ENCODE measurements at regions of chr21 and their contacts with region 1.

Region 1: GRCh38 chr21:38355992-38356797 is 99.4 kb downstream of the KCNJ15 start:
- H3K4me3 ChIP-seq: no peak overlapping the region
- H3K27ac ChIP-seq: no peak overlapping the region
- H3K4me1 ChIP-seq: peaks cover 12% of the 10 kb centered on the region
- CTCF ChIP-seq: peak; percentile 96

Region 2: DNA sequence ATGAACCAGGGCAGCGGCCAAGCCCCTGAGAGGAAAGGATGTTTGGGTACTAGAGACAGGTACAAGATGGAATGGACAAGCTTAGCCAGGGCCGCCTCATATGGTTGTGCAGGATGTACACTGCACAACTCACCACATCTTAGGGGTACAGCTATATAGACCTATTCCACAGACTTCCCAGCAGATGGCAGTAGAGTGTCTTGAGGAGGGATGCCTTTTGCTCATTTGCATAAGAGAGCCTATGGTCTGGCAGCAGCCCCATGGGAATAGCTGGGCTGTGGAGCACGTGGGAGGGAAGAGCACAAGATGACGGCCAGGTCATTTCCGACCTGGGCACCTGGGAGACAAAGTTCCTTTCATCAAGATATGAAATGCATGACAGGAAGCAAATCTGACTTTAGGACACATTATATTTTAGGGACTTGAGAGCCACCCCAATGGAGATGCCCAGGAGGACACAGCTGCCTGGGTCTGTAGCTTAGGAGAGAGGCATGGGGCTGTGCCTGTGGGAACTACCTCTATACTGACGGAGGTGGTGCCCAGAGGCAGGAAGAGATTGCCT is 655.5 kb before region 1 on chr21:
- CTCF ChIA-PET with region 1: interaction called, 17 read pairs
- POLR2A ChIA-PET with region 1: no interaction called
- H3K4me3 ChIP-seq: no peak overlapping the region
- H3K27ac ChIP-seq: no peak overlapping the region
- H3K4me1 ChIP-seq: no peaks in the 10 kb centered on the region
- CTCF ChIP-seq: peak; percentile 76

Region 3: GRCh38 chr21:37855635-37856625 is 500.3 kb before region 1 on chr21:
- CTCF ChIA-PET with region 1: no interaction called
- POLR2A ChIA-PET with region 1: no interaction called
- H3K4me3 ChIP-seq: no peak overlapping the region
- H3K27ac ChIP-seq: no peak overlapping the region
- H3K4me1 ChIP-seq: no peaks in the 10 kb centered on the region
- CTCF ChIP-seq: no peak

Region 4: GRCh38 chr21:38159355-38159754 is 196.8 kb before region 1 on chr21:
- CTCF ChIA-PET with region 1: interaction called, 378 read pairs
- POLR2A ChIA-PET with region 1: no interaction called
- H3K4me3 ChIP-seq: no peak overlapping the region
- H3K27ac ChIP-seq: no peak overlapping the region
- H3K4me1 ChIP-seq: no peaks in the 10 kb centered on the region
- CTCF ChIP-seq: peak; percentile 37

Region 5: GRCh38 chr21:38219049-38219628 is 137.1 kb before region 1 on chr21:
- CTCF ChIA-PET with region 1: interaction called, 124 read pairs
- POLR2A ChIA-PET with region 1: interaction called, 4 read pairs
- H3K4me3 ChIP-seq: no peak overlapping the region
- H3K27ac ChIP-seq: no peak overlapping the region
- H3K4me1 ChIP-seq: no peaks in the 10 kb centered on the region
- CTCF ChIP-seq: peak; percentile 75

Region 6: GRCh38 chr21:38254974-38255373 is 101.2 kb before region 1 on chr21:
- CTCF ChIA-PET with region 1: interaction called, 15 read pairs
- POLR2A ChIA-PET with region 1: no interaction called
- H3K4me3 ChIP-seq: no peak overlapping the region
- H3K27ac ChIP-seq: no peak overlapping the region
- H3K4me1 ChIP-seq: peaks cover 4% of the 10 kb centered on the region
- CTCF ChIP-seq: no peak

Region 7: GRCh38 chr21:38343693-38344092 is 12.5 kb before region 1 on chr21:
- CTCF ChIA-PET with region 1: interaction called, 17 read pairs
- POLR2A ChIA-PET with region 1: no interaction called
- H3K4me3 ChIP-seq: no peak overlapping the region
- H3K27ac ChIP-seq: peak overlapping the region; percentile 61; the same call in 1 of the 2 replicates
- H3K4me1 ChIP-seq: peaks cover 23% of the 10 kb centered on the region
- CTCF ChIP-seq: no peak

Region 8: GRCh38 chr21:38486221-38486620 is 130.0 kb after region 1 on chr21:
- CTCF ChIA-PET with region 1: no interaction called
- POLR2A ChIA-PET with region 1: no interaction called
- H3K4me3 ChIP-seq: no peak overlapping the region
- H3K27ac ChIP-seq: no peak overlapping the region
- H3K4me1 ChIP-seq: peaks cover 15% of the 10 kb centered on the region; the same call in 1 of the 2 replicates
- CTCF ChIP-seq: no peak